Psoas muscle (tissue), 8 donors: ENCODE measurements at regions of chr12 and their contacts with region 1.

Region 1: DNA sequence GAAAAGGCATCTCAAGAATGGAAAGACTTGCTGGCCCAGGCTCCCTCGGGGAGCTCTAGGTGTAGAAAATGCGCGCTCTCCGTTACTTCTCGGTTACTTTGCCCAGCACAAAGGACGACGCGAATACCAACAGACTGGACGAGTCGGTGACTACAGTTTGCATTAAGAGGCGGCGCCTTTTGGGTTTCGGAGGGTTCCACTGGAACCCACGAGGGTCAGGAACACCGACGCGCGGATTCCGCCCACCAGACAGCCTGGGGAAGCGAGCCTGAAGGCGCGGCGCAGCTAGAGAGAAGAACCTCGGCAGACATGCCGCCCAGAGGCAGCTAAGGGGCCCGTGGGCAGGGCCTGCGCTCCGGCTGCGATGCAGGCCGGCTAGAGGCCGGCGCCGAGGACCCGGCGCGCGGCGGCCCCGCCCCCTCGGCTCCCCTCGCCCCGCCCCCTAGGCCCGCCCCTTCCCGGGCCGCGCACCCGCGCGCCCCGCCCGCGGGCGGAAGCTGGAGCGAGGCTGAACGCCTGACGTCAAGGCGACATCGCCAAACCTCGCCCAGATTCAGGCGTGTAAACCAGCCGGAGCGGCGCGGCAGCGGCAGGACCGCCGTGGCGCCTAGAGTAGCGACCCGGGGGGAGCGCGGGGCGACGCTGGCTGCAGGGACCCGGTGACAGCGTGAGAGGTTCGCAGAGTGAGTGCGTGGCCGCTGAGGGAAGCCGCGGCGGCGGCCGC is at the start of gene RAP1B:
- DNase-seq: peak; percentile 88 to 96
- ATAC-seq: peak; percentile 94 to 97 (median 96)
- H3K4me3 ChIP-seq: peak within 1 kb of the TSS; percentile 93
- H3K27ac ChIP-seq: peak within 1 kb of the TSS; percentile 98
- H3K4me1 ChIP-seq: peaks cover 38% of the 10 kb centered on the region
- H3K27me3 ChIP-seq: no peaks in the 10 kb centered on the region
- CTCF ChIP-seq: no peak
- total RNA-seq, gene RAP1B: 36.2 to 65.6 (median 54.1) TPM

Region 2: DNA sequence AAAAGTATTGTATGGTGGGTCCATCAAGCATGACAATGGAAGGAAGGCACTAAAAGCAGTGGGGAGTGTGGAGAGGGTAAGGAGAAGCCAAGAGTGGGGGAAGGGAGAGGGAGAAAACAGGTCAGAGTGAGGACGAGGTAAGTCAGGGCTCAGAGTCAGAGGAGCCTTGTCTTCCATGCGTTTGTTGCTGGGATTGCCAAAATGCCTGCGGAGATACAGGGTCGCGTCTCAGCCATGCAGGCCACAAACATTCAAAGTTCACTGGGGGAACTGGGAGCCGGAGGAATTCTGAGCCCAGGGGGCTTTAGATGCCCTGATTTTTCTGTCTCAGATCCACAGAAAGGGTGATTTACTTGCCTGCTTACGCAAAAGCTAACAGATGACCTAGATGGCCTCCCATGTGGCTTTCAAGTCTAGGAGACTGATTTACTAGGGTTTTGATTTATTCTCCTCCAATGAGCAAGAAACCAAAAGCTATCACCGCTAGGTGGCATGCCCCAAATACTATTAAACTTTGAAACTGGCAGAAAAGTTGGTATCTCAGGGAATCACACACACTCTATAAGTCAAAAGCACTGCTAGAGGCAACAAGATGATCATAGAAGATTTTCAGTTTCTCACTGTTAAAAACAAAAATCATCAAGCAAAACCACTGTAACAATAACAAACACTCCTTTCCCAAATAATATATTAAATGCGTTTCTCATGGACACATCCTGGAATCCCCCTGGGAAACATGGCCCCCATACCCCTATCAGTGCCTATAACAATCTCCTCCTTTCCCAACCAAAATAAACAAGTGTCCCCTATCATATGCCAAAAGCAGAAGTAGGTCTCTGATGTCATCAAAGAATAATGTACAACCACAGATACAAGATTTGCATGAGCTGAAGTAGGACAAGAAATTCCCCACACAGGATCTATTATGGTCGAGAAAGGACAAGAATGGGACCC is 251.7 kb before region 1 on chr12:
- intact Hi-C with region 1: loop called in 1 of 2 experiments (anchors 5 kb)
- DNase-seq: peak in 1 of 2 donors; percentile 21
- ATAC-seq: peak; percentile 75 to 97 (median 86)
- H3K4me3 ChIP-seq: no peak overlapping the region
- H3K27ac ChIP-seq: peak overlapping the region; percentile 5
- H3K4me1 ChIP-seq: peaks cover 13% of the 10 kb centered on the region
- H3K27me3 ChIP-seq: no peaks in the 10 kb centered on the region
- CTCF ChIP-seq: peak; percentile 68

Region 3: GRCh38 chr12:68374307-68374982 is 236.1 kb before region 1 on chr12:
- intact Hi-C with region 1: loop called in 1 of 2 experiments (anchors 10 kb)
- DNase-seq: no peak
- ATAC-seq: peak; percentile 81 to 89 (median 86)
- H3K4me3 ChIP-seq: peak overlapping the region; percentile 3
- H3K27ac ChIP-seq: peak overlapping the region; percentile 68
- H3K4me1 ChIP-seq: peaks cover 47% of the 10 kb centered on the region
- H3K27me3 ChIP-seq: no peaks in the 10 kb centered on the region
- CTCF ChIP-seq: no peak

Region 4: DNA sequence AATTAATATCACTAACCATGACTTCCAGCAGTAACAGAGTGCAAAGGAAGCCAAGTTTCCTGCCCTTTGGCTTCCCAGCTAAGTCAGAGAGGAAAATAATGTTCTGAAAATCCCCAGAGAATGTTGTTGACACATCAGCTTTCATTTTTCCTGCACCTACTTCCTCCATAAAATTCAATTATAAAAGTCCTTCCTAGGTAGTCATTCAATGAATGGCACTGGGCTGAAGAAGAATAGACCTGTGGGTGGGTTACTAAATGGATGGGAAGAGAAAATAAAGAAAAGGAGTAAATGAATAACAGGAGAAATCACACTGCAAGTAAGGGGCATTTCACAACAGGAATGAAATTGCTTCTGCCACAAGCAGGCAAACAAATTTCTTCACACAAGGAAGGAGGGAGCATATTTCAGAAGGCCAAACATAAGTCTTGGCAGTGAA is 205.2 kb before region 1 on chr12:
- intact Hi-C with region 1: loop called in 1 of 2 experiments (anchors 2 kb)
- DNase-seq: no peak
- ATAC-seq: peak in 2 of 4 donors; percentile 22 to 40
- H3K4me3 ChIP-seq: no peak overlapping the region
- H3K27ac ChIP-seq: peak overlapping the region; percentile 69
- H3K4me1 ChIP-seq: peaks cover 35% of the 10 kb centered on the region
- H3K27me3 ChIP-seq: no peaks in the 10 kb centered on the region
- CTCF ChIP-seq: no peak

Region 5: DNA sequence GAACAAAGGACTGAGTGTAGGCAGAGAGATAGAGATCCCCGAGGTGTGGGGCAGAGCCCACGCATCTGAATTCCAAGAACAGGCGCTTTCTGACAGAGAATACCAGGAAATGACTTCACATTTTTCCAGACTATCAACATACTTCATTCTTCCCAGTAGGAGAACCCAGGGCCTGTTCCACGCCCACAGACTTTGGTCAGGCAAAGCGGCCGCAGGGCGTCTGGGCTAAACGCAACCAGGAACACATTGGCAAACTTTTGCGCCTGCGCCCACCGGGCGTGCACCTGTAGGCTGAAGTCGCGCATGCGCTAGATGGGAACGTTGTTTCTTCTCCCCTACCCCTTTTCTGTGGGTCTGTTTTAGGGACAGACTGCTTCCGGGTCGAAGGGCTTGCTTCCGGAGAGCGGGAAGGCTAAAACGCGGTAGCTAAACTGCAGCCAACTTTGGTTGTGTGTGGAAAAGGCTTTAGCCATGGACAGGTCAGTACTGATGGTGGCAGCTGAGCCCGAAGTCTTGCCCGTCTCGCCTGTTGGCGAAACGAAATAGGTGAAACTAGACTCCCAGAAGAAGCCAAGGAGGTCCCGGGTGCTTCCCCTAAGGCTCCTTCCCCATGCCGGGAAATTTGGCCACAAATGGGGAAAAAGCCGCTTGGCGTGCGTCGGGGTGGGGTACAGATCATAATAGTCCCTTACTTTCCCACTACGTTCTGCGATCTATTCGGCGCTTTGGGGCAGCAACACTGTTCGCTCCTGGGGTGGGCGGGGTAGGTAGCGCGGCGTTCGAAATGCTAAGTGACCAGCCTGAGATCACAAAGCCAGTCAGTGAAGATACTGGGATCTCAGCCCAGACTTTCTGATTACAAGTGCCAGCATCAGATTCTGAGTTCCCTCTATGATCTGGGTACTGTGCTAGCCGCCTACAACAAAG is 76.3 kb after region 1 on chr12 and contains the start of gene NUP107:
- intact Hi-C with region 1: loop called (anchors 5 to 10 kb)
- DNase-seq: peak; percentile 99 to 100
- ATAC-seq: peak; percentile 99 to 100 (median 99)
- H3K4me3 ChIP-seq: peak within 1 kb of the TSS; percentile 86
- H3K27ac ChIP-seq: peak within 1 kb of the TSS; percentile 81
- H3K4me1 ChIP-seq: peaks cover 14% of the 10 kb centered on the region
- H3K27me3 ChIP-seq: no peaks in the 10 kb centered on the region
- CTCF ChIP-seq: peak; percentile 11
- total RNA-seq, gene NUP107: 17.6 to 21.1 (median 20.2) TPM